Stomach (tissue), 19 donors: ENCODE measurements at regions of chr2 and their contacts with region 1.

Region 1: GRCh38 chr2:43239981-43240761 is 13.8 kb upstream of the ZFP36L2 start:
- DNase-seq: no peak
- H3K4me3 ChIP-seq: no peak overlapping the region
- H3K27ac ChIP-seq: peak overlapping the region in 3 of 5 donors; percentile 9 to 57 (median 49)
- H3K4me1 ChIP-seq: no peaks in the 10 kb centered on the region
- H3K27me3 ChIP-seq: no peaks in the 10 kb centered on the region
- CTCF ChIP-seq: no peak
- EP300 ChIP-seq: no peak
- POLR2A ChIP-seq: no peak

Region 2: GRCh38 chr2:42722320-42723190 is 517.6 kb before region 1 on chr2:
- intact Hi-C with region 1: no loop called
- DNase-seq: peak; percentile 65 to 86
- H3K4me3 ChIP-seq: no peak overlapping the region
- H3K27ac ChIP-seq: peak overlapping the region; percentile 25 to 58 (median 45)
- H3K4me1 ChIP-seq: peaks cover 0 to 20% (median 8%) of the 10 kb centered on the region in 4 donors
- H3K27me3 ChIP-seq: no peaks in the 10 kb centered on the region
- CTCF ChIP-seq: no peak
- EP300 ChIP-seq: no peak
- POLR2A ChIP-seq: no peak

Region 3: GRCh38 chr2:42859006-42859552 is 381.1 kb before region 1 on chr2:
- intact Hi-C with region 1: loop called (anchors 10 kb)
- DNase-seq: peak; percentile 83 to 89
- H3K4me3 ChIP-seq: no peak overlapping the region
- H3K27ac ChIP-seq: no peak overlapping the region
- H3K4me1 ChIP-seq: peaks cover 0 to 12% (median 5%) of the 10 kb centered on the region in 4 donors
- H3K27me3 ChIP-seq: no peaks in the 10 kb centered on the region
- CTCF ChIP-seq: peak in 6 of 7 experiments; percentile 24 to 96 (median 86)
- EP300 ChIP-seq: no peak
- POLR2A ChIP-seq: no peak

Region 4: DNA sequence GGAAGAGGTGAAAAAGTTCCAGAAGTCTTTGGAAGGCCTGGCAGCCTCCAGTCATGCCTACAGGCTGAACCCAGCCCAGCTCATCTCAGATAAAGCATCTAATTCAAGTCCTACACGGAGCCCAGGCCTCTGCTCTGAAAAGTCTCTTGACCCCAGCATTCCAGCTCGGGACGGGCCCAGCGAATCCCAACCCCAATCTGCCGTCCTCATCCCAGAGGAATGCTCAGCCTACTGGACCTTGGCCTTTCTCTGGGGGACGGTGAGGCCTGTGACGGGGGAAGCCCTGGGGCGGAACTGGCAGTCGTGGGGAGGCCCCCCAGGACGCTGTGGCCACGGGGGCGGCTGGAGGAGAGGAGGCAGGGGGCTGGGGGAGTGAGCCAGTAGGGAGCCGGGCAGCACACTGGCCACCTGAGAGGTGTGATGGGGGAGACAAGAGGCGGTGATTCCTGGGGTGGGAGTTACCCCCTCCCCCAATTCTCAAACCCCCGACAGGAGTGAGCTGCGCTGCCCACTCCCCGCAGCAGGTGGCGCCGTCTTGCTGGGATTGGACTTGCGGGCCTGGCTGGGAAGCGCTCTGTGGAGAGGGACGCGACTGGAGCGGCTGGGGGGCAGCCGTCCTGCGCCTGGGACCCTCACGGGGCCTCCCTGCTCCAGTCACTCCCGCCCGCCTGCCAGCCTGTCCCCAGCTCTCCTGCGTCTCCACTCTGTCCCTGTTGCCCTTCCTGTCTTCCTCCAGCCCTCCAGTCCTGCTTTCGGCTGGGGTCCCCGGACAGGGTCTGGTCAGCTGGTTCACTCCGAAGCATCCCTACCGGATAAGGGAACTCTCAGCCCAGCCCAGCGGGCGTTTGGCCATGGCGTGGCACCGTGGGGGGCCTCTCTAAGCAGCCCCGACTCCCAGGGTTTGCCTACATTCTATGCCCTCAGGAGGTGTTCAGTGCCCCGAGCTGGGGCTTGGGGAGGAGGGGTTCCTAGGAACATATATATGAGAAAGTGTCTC is 265.2 kb before region 1 on chr2:
- intact Hi-C with region 1: loop called (anchors 10 kb)
- DNase-seq: peak; percentile 77 to 92
- H3K4me3 ChIP-seq: peak overlapping the region; percentile 31 to 43 (median 38)
- H3K27ac ChIP-seq: peak overlapping the region; percentile 33 to 81 (median 67)
- H3K4me1 ChIP-seq: peaks cover 25 to 63% (median 52%) of the 10 kb centered on the region in 4 donors
- H3K27me3 ChIP-seq: no peaks in the 10 kb centered on the region
- CTCF ChIP-seq: peak in 6 of 7 experiments; percentile 49 to 94 (median 91)
- EP300 ChIP-seq: no peak
- POLR2A ChIP-seq: no peak